ENCODE measurements at regions of chr1 and their contacts with region 1.

Region 1: DNA sequence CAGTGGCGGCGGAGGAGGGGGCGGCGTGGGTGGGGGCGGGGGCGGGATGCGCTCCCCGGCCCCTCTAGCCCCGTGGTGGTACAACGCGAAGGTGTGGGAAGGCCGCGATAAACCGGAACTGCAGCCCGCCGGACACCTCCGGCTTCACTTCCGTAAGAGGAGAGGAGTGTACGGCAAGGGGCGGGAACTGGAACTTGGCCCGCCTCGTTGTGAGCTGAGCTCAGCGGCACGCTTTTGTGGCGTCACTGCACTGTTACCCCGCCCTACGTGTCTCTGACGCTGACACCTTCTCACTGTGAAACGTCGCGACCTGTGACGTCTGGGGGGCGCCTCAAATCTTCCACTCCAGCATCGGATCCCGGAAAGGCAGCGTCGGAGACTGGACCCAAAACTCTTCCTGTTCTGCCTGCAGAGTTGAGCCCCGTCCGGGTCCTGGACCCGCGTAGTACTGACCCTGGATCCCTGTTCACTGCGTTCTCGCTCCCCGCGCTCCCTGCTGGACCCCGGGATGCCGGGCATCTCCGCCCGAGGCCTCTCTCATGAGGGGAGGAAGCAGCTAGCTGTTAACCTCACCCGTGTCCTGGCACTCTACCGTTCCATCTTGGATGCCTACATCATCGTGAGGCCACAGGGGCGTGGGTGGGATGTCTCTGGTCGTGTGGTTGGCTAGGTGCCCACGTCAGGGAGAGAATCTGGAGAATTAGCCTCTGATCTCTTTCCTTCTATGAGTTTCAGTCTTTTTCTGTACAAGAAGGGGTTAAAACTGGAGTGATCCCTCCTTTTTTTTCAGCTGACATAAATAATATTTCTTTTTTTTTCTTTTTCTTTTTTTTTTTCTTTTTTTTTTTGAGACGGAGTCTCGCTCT is at the start of gene ISG20L2:
- DNase-seq: peak; percentile 99
- H3K4me3 Mint-ChIP-seq: no peak within 1 kb of the TSS
- H3K27ac Mint-ChIP-seq: no peak within 1 kb of the TSS
- H3K4me1 Mint-ChIP-seq: peaks cover 28% of the 10 kb centered on the region
- H3K27me3 Mint-ChIP-seq: no peaks in the 10 kb centered on the region
- total RNA-seq, gene ISG20L2: 75.4 and 83.1 TPM in 2 replicates

Region 2: GRCh38 chr1:156054500-156055280 is 674.1 kb before region 1 on chr1 and contains the start of gene LAMTOR2:
- intact Hi-C with region 1: loop called (anchors 10 kb)
- DNase-seq: peak; percentile 99
- H3K4me3 Mint-ChIP-seq: peak within 1 kb of the TSS; percentile 98
- H3K27ac Mint-ChIP-seq: peak within 1 kb of the TSS; percentile 89
- H3K4me1 Mint-ChIP-seq: peaks cover 30% of the 10 kb centered on the region
- H3K27me3 Mint-ChIP-seq: no peaks in the 10 kb centered on the region
- total RNA-seq, gene LAMTOR2: 69.9 and 73.0 TPM in 2 replicates

Region 3: GRCh38 chr1:156160743-156161171 is 568.1 kb before region 1 on chr1:
- intact Hi-C with region 1: no loop called
- DNase-seq: peak; percentile 86
- H3K4me3 Mint-ChIP-seq: peak overlapping the region; percentile 73
- H3K27ac Mint-ChIP-seq: peak overlapping the region; percentile 79
- H3K4me1 Mint-ChIP-seq: peaks cover 50% of the 10 kb centered on the region
- H3K27me3 Mint-ChIP-seq: no peaks in the 10 kb centered on the region

Region 4: GRCh38 chr1:156625436-156626078 is 103.3 kb before region 1 on chr1:
- intact Hi-C with region 1: loop called (anchors 1 kb)
- DNase-seq: peak; percentile 90
- H3K4me3 Mint-ChIP-seq: peak overlapping the region; percentile 84
- H3K27ac Mint-ChIP-seq: peak overlapping the region; percentile 50
- H3K4me1 Mint-ChIP-seq: peaks cover 9% of the 10 kb centered on the region
- H3K27me3 Mint-ChIP-seq: peaks cover 60% of the 10 kb centered on the region

Region 5: DNA sequence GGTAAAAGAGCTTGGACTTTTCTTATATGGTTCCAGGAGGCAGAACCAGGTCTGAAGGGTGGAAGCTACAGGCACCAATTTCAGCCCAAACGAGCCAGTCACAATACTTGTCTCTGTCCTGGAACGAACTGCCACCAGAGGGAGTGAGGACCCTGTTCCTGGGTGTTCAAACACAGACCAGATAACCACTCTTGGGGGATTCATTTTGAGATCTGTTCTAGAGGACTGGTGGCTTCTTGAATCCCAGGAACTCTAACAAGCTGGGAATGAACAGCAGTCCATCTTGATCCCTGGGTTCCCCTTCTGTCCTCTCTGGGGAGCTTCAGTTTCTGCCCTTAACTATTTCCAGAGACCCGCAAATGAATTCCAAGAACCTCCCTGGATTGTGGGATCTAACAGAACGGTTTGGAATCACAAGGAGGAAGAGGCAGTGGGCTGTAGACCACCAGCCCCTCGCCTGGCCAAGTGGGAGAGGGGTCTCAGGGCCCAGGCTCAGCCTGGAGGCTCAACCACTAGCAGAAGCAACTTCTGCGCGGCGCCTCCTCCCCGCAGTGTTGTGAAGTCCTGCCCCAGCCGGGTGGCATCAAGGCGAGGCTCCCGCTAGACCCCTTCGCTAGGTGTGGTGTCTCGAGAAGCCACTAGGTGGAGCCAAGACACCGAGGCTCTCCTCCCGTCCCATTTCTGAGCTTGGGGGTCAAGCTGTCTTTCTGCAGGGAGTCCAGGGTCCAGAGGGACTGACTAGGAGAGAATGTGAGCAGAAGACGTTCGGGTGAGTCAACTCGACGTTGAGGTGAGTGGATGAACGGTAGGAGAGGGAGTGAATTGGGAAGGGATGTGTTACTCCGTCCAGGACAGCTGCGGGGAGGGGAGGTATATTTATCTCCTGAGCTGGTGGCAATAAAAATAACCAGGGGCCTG is 39.5 kb before region 1 on chr1:
- intact Hi-C with region 1: loop called (anchors 1 kb)
- DNase-seq: peak; percentile 92
- H3K4me3 Mint-ChIP-seq: peak overlapping the region; percentile 68
- H3K27ac Mint-ChIP-seq: no peak overlapping the region
- H3K4me1 Mint-ChIP-seq: peaks cover 28% of the 10 kb centered on the region
- H3K27me3 Mint-ChIP-seq: peaks cover 60% of the 10 kb centered on the region

Region 6: DNA sequence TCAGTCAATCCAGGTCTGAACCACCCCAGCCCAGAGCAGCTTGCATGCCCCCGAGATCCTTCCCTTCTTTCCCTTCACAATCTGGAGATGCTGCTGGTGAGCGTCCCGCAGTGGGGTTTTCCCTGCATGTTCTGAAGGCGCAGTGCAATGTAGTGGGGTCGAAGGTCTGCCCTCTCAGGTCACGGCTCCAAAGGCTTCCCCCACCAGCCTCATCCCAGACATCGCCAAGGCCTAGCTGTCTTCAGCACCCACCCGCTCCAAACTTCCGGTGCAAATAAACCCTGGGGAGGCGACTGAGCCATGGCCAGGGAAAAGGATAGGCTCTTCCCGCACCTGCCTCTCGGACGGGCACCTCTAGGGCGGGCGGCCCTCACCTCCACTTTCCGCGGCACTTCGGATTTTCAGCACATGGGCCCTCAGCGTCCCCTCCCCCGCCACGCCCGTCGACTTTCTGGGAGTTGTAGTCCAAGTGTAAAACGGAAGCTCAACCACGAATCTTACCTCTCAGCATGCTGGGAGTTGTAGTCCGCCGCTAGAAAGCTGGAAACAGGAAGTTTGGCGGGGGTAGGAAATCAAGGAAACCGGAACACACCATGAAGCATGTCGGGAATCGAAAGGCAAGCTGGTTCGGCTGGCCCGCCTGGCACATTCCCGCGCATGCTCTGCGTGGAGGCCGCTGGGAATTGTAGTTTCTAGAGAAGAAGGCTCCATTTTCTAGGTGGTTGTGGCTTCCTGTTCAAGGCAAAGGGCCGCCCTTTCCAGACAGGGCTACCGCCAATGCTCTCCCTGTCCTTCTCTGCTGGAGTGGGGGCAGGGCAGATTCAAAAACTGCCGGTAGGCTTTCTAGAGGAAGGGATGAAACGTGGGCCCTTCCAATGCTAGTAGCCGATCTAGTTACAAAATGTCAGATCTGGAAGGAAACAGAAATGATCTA is 12.1 kb after region 1 on chr1 and contains the start of gene MRPL24:
- intact Hi-C with region 1: loop called (anchors 1 kb)
- DNase-seq: peak; percentile 99
- H3K4me3 Mint-ChIP-seq: peak within 1 kb of the TSS; percentile 98
- H3K27ac Mint-ChIP-seq: peak within 1 kb of the TSS; percentile 96
- H3K4me1 Mint-ChIP-seq: peaks cover 25% of the 10 kb centered on the region
- H3K27me3 Mint-ChIP-seq: no peaks in the 10 kb centered on the region
- total RNA-seq, gene MRPL24: 134 and 135 TPM in 2 replicates

Region 7: GRCh38 chr1:156767101-156767878 is 38.5 kb after region 1 on chr1 and contains the start of gene PRCC:
- intact Hi-C with region 1: loop called (anchors 1 kb)
- DNase-seq: peak; percentile 99
- H3K4me3 Mint-ChIP-seq: no peak within 1 kb of the TSS
- H3K27ac Mint-ChIP-seq: peak within 1 kb of the TSS; percentile 79
- H3K4me1 Mint-ChIP-seq: peaks cover 33% of the 10 kb centered on the region
- H3K27me3 Mint-ChIP-seq: no peaks in the 10 kb centered on the region
- total RNA-seq, gene PRCC: 106 and 120 TPM in 2 replicates

Region 8: GRCh38 chr1:156860113-156860627 is 131.3 kb after region 1 on chr1:
- intact Hi-C with region 1: loop called (anchors 1 kb)
- DNase-seq: peak; percentile 91
- H3K4me3 Mint-ChIP-seq: peak overlapping the region; percentile 80
- H3K27ac Mint-ChIP-seq: peak overlapping the region; percentile 18
- H3K4me1 Mint-ChIP-seq: peaks cover 51% of the 10 kb centered on the region
- H3K27me3 Mint-ChIP-seq: peaks cover 25% of the 10 kb centered on the region